ENCODE measurements at regions of chr3 and their contacts with region 1.

Region 1: GRCh38 chr3:101803173-101803782 is 24.3 kb downstream of the NXPE3 start:
- DNase-seq: peak; percentile 68
- ATAC-seq: peak; percentile 99
- H3K4me3 Mint-ChIP-seq: no peak overlapping the region
- H3K27ac Mint-ChIP-seq: no peak overlapping the region
- H3K4me1 Mint-ChIP-seq: peaks cover 35% of the 10 kb centered on the region
- H3K27me3 Mint-ChIP-seq: no peaks in the 10 kb centered on the region
- CTCF ChIP-seq: peak; percentile 88

Region 2: DNA sequence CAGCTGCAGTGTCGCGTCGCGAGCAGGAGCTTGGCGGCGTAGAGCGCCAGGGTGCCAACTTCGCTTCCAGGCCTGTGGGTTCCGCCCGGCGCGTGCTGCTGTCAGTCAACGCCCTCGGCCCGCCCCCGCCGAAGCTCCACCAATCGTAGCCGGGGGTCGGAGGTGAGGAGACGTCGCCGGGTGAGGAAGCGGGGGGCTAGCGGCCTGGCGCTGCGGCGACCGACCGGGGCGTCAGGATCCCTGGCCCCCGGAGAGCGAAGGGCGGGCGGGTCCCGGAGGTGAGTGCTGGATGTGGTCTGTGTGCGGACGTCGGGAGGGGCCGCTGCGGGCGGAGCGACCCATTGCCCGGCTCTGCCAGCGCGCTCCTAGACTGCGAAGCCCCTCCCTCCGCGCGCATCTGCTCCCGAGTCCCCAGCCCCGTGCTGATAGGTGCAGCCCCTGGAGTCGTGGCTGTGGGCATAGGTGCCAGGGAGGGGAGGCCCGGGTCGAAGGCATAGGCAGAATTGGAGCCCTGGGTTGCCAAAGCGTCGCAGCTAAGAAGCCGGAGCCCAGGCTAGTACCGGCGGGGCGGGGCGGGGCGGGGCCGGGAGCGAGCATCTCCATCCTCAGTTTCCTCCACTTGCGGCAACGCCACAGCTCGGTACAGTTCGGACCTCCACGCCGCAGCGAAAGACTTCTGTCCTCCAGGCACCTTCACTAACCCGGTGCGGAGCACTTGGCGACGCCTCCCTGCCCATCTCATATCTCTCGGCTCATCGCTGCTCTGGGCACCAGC is 24.0 kb before region 1 on chr3 and contains the start of gene NXPE3:
- CTCF ChIA-PET with region 1: interaction called, 20 read pairs
- POLR2A ChIA-PET with region 1: no interaction called
- intact Hi-C with region 1: no loop called
- DNase-seq: peak; percentile 97
- ATAC-seq: peak; percentile 91
- H3K4me3 Mint-ChIP-seq: peak within 1 kb of the TSS; percentile 85
- H3K27ac Mint-ChIP-seq: peak within 1 kb of the TSS; percentile 98
- H3K4me1 Mint-ChIP-seq: peaks cover 48% of the 10 kb centered on the region
- H3K27me3 Mint-ChIP-seq: no peaks in the 10 kb centered on the region
- CTCF ChIP-seq: no peak
- total RNA-seq, gene NXPE3: 20.9 to 21.6 TPM

Region 3: GRCh38 chr3:101784855-101785613 is 18.2 kb before region 1 on chr3:
- CTCF ChIA-PET with region 1: interaction called, 20 read pairs
- POLR2A ChIA-PET with region 1: interaction called, 5 read pairs
- intact Hi-C with region 1: no loop called
- DNase-seq: no peak
- ATAC-seq: peak; percentile 57
- H3K4me3 Mint-ChIP-seq: peak overlapping the region; percentile 59
- H3K27ac Mint-ChIP-seq: peak overlapping the region; percentile 88
- H3K4me1 Mint-ChIP-seq: peaks cover 64% of the 10 kb centered on the region
- H3K27me3 Mint-ChIP-seq: no peaks in the 10 kb centered on the region
- CTCF ChIP-seq: no peak

Region 4: DNA sequence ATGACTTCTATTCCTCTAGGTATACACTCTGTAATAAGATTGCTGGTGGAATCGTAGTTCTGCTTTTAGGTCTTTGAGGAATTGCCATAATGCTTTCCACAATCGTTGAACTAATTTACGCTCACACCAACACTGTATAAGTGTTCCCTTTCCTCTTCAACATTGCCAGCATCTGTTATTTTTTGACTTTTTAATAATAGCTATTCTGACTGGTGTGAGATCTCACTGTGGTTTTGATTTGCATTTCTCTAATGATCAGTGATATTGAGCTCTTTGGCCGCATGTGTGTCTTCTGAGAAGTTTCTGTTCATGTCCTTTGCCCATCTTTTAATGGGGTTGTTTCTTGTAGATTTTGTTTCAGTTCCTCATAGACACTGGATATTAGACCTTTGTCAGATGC is 11.5 kb before region 1 on chr3:
- CTCF ChIA-PET with region 1: interaction called, 29 read pairs
- POLR2A ChIA-PET with region 1: no interaction called
- intact Hi-C with region 1: no loop called
- DNase-seq: no peak
- ATAC-seq: no peak
- H3K4me3 Mint-ChIP-seq: no peak overlapping the region
- H3K27ac Mint-ChIP-seq: no peak overlapping the region
- H3K4me1 Mint-ChIP-seq: peaks cover 48% of the 10 kb centered on the region
- H3K27me3 Mint-ChIP-seq: no peaks in the 10 kb centered on the region
- CTCF ChIP-seq: no peak

Region 5: GRCh38 chr3:101819758-101820157 is 16.5 kb after region 1 on chr3:
- CTCF ChIA-PET with region 1: interaction called, 34 read pairs
- POLR2A ChIA-PET with region 1: interaction called, 5 read pairs
- intact Hi-C with region 1: no loop called
- DNase-seq: no peak
- ATAC-seq: peak; percentile 66
- H3K4me3 Mint-ChIP-seq: no peak overlapping the region
- H3K27ac Mint-ChIP-seq: peak overlapping the region; percentile 63
- H3K4me1 Mint-ChIP-seq: peaks cover 51% of the 10 kb centered on the region
- H3K27me3 Mint-ChIP-seq: no peaks in the 10 kb centered on the region
- CTCF ChIP-seq: no peak

Region 6: DNA sequence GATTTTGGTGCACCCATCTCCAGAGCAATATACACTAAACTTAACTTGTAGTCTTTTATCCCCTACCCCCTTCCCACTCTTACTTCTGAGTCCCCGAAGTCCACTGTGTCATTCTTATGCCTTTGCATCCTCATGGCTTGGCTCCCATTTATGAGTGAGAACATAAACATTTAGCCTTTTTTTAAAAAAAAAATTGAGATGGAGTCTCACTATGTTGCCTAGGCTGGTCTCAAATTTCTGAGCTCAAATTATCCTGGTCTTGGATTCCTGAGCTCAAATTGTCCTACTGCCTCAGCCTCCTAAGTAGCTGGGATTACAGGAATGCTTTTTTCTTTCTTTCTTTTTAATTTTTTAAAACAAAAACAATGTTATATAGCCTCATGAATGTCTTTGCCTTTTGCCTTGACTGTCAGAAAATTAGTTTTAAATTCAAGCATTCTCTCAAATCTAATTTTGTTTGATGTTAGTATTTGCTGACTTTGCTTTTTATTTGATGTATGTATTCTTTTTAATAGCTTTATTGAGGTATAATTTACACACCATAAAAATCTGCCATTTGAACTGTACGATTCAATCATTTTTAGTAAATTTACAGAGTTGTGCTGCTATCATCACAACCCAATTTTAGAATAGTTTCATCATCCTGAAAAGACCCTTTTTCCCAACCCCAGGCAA is 92.9 kb after region 1 on chr3:
- CTCF ChIA-PET with region 1: no interaction called
- POLR2A ChIA-PET with region 1: no interaction called
- intact Hi-C with region 1: no loop called
- DNase-seq: no peak
- ATAC-seq: no peak
- H3K4me3 Mint-ChIP-seq: no peak overlapping the region
- H3K27ac Mint-ChIP-seq: no peak overlapping the region
- H3K4me1 Mint-ChIP-seq: peaks cover 3% of the 10 kb centered on the region
- H3K27me3 Mint-ChIP-seq: no peaks in the 10 kb centered on the region
- CTCF ChIP-seq: no peak